HEK293T (cell line): ENCODE measurements at regions of chrX and their contacts with region 1.

Region 1: GRCh38 chrX:13428055-13428786 is 108.4 kb upstream of the ATXN3L start:
- DNase-seq: no peak

Region 2: GRCh38 chrX:13756381-13756780 is 328.2 kb after region 1 on chrX:
- CTCF ChIA-PET with region 1: interaction called, 10 read pairs
- POLR2A ChIA-PET with region 1: no interaction called
- DNase-seq: no peak